Heart left ventricle (tissue), 16 donors: ENCODE measurements at regions of chr18 and their contacts with region 1.

Region 1: DNA sequence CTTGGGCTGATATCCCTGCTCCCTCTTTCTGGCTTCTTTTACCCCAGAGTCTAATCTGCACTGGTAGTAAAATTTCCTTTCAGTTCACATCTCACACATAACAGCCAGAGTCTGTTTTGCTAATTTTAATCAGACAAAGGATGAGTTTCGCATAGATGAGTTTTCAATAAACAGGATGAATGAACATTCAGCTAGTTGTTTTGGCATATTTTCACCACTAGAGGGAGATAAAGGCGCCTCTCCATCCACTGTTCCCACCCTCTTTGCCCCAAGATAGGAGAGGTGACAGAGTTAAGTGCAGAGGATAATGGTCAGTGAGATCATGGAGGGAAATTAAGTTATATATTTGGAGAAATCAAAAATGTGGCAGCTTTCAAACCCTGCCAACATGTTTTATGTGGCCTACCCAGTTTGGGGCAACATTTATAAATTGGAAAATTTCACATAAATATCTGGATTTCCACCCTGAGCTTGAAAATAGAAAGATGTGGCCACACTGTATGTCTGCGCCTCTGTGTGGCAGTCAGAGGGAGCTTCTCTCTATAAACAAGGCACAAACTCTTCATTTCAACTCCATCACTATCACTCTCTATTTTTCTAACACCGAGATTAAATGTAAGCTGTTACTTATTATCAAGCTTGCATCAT is 48.5 kb upstream of the DTNA start:
- DNase-seq: no peak
- ATAC-seq: peak in 3 of 4 donors; percentile 57 to 67 (median 62)
- H3K4me3 ChIP-seq: no peak overlapping the region
- H3K27ac ChIP-seq: peak overlapping the region in 6 of 12 donors; percentile 7 to 92 (median 82)
- H3K4me1 ChIP-seq: peaks cover 0 to 55% (median 18%) of the 10 kb centered on the region in 12 donors
- H3K27me3 ChIP-seq: no peaks in the 10 kb centered on the region
- CTCF ChIP-seq: peak; percentile 67 to 83 (median 76)
- POLR2A ChIP-seq: no peak

Region 2: DNA sequence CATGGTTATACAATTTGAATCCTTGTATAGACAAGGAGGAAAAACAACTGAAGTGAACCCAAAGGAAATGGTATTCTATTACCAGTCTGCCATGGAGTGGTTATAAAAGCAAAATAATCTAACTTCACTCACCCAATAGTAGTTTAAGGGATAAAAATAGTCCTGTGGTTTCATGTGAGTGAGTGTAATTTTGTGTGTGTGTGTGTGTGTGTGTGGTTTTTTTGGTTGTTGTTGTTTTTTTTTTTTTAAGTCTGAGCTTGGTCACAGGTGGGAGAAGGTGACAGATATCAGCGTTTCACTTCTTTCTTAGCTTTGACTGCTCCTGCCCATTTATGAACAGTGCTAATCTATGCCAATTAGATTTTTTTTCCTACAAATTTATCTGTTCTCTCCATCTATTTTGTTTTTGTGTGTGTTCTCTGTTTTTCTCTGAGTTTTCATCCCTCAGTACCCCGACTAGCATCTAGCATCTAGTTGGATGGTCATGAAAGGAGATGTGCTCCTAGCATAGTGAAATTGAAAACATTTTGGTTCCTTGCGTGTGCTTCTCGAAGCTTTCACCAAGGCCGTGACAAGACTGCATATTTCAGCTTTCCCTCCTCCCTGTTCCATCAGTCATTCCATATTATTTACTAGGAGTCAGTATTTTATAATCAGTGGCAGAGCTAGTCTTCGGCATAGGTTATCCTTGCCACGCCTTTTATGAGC is 151.6 kb before region 1 on chr18:
- intact Hi-C with region 1: loop called in 1 of 10 experiments (anchors 10 kb)
- DNase-seq: no peak
- ATAC-seq: peak in 1 of 4 donors; percentile 55
- H3K4me3 ChIP-seq: no peak overlapping the region
- H3K27ac ChIP-seq: peak overlapping the region in 6 of 12 donors; percentile 20 to 62 (median 43)
- H3K4me1 ChIP-seq: peaks cover 0 to 32% (median 10%) of the 10 kb centered on the region in 12 donors
- H3K27me3 ChIP-seq: no peaks in the 10 kb centered on the region
- CTCF ChIP-seq: no peak
- POLR2A ChIP-seq: no peak

Region 3: GRCh38 chr18:34592961-34593382 is 68.6 kb before region 1 on chr18:
- intact Hi-C with region 1: loop called in 2 of 10 experiments (anchors 5 kb)
- DNase-seq: peak in 4 of 5 donors; percentile 61 to 78 (median 68)
- ATAC-seq: peak; percentile 89 to 95 (median 94)
- H3K4me3 ChIP-seq: peak overlapping the region in 11 of 12 donors; percentile 26 to 57 (median 48)
- H3K27ac ChIP-seq: peak overlapping the region; percentile 43 to 86 (median 76)
- H3K4me1 ChIP-seq: peaks cover 0 to 37% (median 6%) of the 10 kb centered on the region in 12 donors
- H3K27me3 ChIP-seq: no peaks in the 10 kb centered on the region
- CTCF ChIP-seq: no peak
- POLR2A ChIP-seq: no peak

Region 4: GRCh38 chr18:34729264-34729663 is 67.7 kb after region 1 on chr18:
- intact Hi-C with region 1: loop called in 1 of 10 experiments (anchors 5 kb)
- DNase-seq: no peak
- ATAC-seq: peak; percentile 41 to 68 (median 60)
- H3K4me3 ChIP-seq: no peak overlapping the region
- H3K27ac ChIP-seq: peak overlapping the region in 11 of 12 donors; percentile 20 to 86 (median 69)
- H3K4me1 ChIP-seq: peaks cover 0 to 33% (median 12%) of the 10 kb centered on the region in 12 donors
- H3K27me3 ChIP-seq: no peaks in the 10 kb centered on the region
- CTCF ChIP-seq: peak in 10 of 12 donors; percentile 17 to 53 (median 45)
- POLR2A ChIP-seq: no peak

Region 5: GRCh38 chr18:34760444-34760843 is 98.9 kb after region 1 on chr18:
- intact Hi-C with region 1: no loop called
- DNase-seq: peak; percentile 36 to 65 (median 49)
- ATAC-seq: peak; percentile 84 to 87 (median 86)
- H3K4me3 ChIP-seq: no peak overlapping the region
- H3K27ac ChIP-seq: peak overlapping the region in 2 of 12 donors; percentile 33 to 41
- H3K4me1 ChIP-seq: peaks cover 0 to 16% (median 0%) of the 10 kb centered on the region in 12 donors
- H3K27me3 ChIP-seq: no peaks in the 10 kb centered on the region
- CTCF ChIP-seq: no peak
- POLR2A ChIP-seq: no peak

Region 6: DNA sequence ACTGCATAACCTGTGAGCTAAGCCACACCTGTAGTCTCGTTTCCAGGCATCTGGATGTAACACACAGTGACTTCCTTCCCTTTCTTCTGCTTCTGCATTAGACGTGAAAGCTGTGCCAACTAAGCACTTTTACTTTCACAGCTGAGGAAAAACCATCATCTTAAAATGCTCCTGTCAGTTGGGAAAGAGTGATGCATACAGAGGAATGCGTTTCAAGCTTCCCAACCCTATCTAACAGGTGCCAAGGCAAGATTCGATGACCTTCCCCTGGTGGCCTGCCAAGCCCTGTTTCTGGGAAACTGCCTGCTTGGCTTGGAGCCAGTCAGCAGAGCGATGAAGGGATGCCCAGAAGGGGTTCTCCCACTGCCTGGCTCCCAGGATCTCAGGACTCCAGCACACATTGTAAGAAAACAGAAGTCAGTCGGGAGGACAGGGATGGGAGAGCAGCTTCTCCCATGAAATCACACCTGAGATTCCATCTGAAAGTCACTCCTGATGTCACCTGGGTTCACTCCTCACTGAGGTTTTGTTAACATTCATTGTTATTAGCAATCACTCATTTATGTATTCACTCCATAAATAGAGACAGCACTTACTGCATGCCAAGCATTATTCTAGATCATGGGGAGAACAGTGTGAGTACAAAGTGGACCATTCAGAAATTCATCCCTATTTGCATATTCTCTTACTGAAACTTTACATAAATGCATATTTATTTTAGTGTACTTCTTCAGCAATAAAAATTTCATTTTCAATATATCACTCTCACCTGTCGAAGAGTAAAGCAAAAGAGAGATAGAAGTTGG is 112.6 kb after region 1 on chr18:
- intact Hi-C with region 1: loop called in 1 of 10 experiments (anchors 5 kb)
- DNase-seq: peak; percentile 44 to 75 (median 62)
- ATAC-seq: peak; percentile 47 to 78 (median 73)
- H3K4me3 ChIP-seq: no peak overlapping the region
- H3K27ac ChIP-seq: peak overlapping the region in 9 of 12 donors; percentile 28 to 70 (median 49)
- H3K4me1 ChIP-seq: peaks cover 0 to 27% (median 19%) of the 10 kb centered on the region in 12 donors
- H3K27me3 ChIP-seq: no peaks in the 10 kb centered on the region
- CTCF ChIP-seq: no peak
- POLR2A ChIP-seq: no peak